Activated CD8-positive, alpha-beta T cell treated with anti-CD3 and anti-CD28 coated beads for 36 hours (primary cell): ENCODE measurements at regions of chr6 and their contacts with region 1.

Region 1: DNA sequence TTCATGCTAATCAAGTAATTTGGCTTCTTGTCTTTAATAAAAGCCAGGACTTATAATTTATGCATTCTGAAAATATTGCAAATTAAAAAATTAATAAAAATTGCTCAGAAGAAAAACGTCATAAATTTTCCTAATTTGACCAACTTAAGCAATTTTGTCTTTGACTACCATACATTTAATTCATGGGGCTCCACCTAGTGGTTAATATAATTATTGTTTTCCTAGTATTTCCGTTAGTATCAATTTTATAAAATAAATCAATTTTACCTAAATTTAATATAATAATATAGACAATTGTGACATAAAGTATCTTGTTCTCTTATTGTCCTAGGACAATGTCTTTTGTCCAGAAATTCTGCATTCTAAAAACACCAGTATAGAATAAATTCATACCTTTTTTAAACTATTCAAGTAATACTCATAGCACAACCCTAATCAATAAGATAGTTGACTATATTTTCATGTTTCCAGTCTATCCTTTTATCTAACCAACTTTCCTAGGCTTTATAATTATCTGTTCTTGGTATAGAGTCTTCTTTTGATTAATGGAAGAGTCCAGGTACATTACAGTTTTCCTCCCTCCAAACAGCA is 319.9 kb downstream of the TRDN start:
- DNase-seq: no peak
- ATAC-seq: no peak
- H3K4me3 Mint-ChIP-seq: no peak overlapping the region
- H3K27ac Mint-ChIP-seq: no peak overlapping the region
- H3K4me1 Mint-ChIP-seq: no peaks in the 10 kb centered on the region
- H3K27me3 Mint-ChIP-seq: no peaks in the 10 kb centered on the region
- CTCF ChIP-seq: peak; percentile 47

Region 2: GRCh38 chr6:122730775-122731386 is 585.9 kb before region 1 on chr6:
- CTCF ChIA-PET with region 1: no interaction called
- POLR2A ChIA-PET with region 1: no interaction called
- intact Hi-C with region 1: loop called (anchors 5 kb)
- DNase-seq: no peak
- ATAC-seq: peak; percentile 24
- H3K4me3 Mint-ChIP-seq: no peak overlapping the region
- H3K27ac Mint-ChIP-seq: no peak overlapping the region
- H3K4me1 Mint-ChIP-seq: no peaks in the 10 kb centered on the region
- H3K27me3 Mint-ChIP-seq: peaks cover 9% of the 10 kb centered on the region
- CTCF ChIP-seq: peak; percentile 84

Region 3: DNA sequence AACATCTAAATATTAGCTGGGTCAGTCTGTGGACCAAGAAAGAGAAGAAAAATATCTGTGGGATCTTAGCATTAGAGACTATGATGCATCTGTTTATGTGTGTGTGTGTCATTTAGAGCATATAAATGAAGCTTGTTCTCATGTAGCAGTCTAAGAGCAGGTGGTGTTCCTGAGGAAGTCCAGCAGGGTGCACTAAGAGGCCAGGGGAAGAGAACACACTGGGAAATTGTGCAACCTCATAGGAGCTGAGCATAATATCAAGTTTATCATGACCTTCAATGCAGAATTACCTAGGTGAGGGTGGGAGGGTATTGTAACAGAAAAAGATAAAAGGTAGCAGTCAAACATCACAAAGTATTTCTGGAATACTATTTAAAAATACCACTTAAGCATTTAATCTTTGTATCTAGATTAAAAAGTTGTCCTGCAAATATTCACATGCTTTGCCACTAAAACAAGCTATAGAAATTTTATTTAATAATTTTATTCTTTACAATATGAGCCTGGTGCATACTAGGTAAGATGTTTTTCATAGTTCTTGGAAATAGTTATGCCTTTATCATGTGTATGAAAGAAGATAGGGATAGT is 447.3 kb before region 1 on chr6:
- CTCF ChIA-PET with region 1: interaction called, 3 read pairs
- POLR2A ChIA-PET with region 1: no interaction called
- intact Hi-C with region 1: loop called (anchors 10 kb)
- DNase-seq: peak; percentile 17
- ATAC-seq: peak; percentile 53
- H3K4me3 Mint-ChIP-seq: no peak overlapping the region
- H3K27ac Mint-ChIP-seq: no peak overlapping the region
- H3K4me1 Mint-ChIP-seq: no peaks in the 10 kb centered on the region
- H3K27me3 Mint-ChIP-seq: peaks cover 5% of the 10 kb centered on the region
- CTCF ChIP-seq: peak; percentile 22

Region 4: DNA sequence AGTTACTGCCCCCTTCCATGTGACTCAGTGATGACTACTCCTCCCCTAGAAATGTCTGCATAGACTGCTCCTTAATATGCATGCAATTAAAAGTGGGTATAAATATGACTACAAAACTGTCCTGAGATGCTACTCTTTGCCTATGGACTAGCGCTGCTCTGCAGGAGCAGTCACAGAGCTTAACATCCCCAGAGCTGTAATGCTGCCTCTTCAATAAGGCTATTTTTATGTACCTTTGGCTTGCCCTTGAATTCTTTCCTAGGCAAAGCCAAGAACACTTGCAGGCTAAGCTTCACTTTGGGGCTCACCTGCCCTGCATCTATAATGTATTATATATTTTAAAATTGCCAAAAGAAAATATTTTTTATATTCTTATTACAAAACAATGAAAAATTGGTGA is 21.6 kb before region 1 on chr6:
- CTCF ChIA-PET with region 1: no interaction called
- POLR2A ChIA-PET with region 1: no interaction called
- intact Hi-C with region 1: no loop called
- DNase-seq: no peak
- ATAC-seq: no peak
- H3K4me3 Mint-ChIP-seq: no peak overlapping the region
- H3K27ac Mint-ChIP-seq: no peak overlapping the region
- H3K4me1 Mint-ChIP-seq: no peaks in the 10 kb centered on the region
- H3K27me3 Mint-ChIP-seq: no peaks in the 10 kb centered on the region
- CTCF ChIP-seq: no peak